ENCODE measurements at regions of chr2 and their contacts with region 1.

Region 1: GRCh38 chr2:176126929-176127773 is 2.4 kb upstream of the HOXD8 start:
- DNase-seq: peak in 1 of 2 experiments; percentile 82
- H3K4me3 ChIP-seq: no peak overlapping the region
- H3K4me1 ChIP-seq: peaks cover 11% of the 10 kb centered on the region; the same call in 1 of the 2 replicates
- H3K27me3 ChIP-seq: peaks cover 6% of the 10 kb centered on the region; the same call in 1 of the 2 replicates

Region 2: GRCh38 chr2:176554101-176555048 is 427.2 kb after region 1 on chr2:
- in situ Hi-C with region 1: loop called (anchors 10 kb)
- DNase-seq: peak; percentile 38 to 48
- H3K4me3 ChIP-seq: peak overlapping the region; percentile 14
- H3K4me1 ChIP-seq: peaks cover 4% of the 10 kb centered on the region; the same call in 1 of the 2 replicates
- H3K27me3 ChIP-seq: peaks cover 45% of the 10 kb centered on the region

Region 3: GRCh38 chr2:176595986-176596385 is 468.8 kb after region 1 on chr2:
- in situ Hi-C with region 1: no loop called
- DNase-seq: no peak
- H3K4me3 ChIP-seq: no peak overlapping the region
- H3K4me1 ChIP-seq: no peaks in the 10 kb centered on the region
- H3K27me3 ChIP-seq: peaks cover 8% of the 10 kb centered on the region

Region 4: GRCh38 chr2:176638167-176639015 is 511.2 kb after region 1 on chr2:
- in situ Hi-C with region 1: loop called (anchors 5 kb)
- DNase-seq: peak; percentile 51 to 79
- H3K4me3 ChIP-seq: peak overlapping the region; percentile 31
- H3K4me1 ChIP-seq: no peaks in the 10 kb centered on the region
- H3K27me3 ChIP-seq: peaks cover 63% of the 10 kb centered on the region

Region 5: GRCh38 chr2:176814306-176815052 is 687.3 kb after region 1 on chr2:
- in situ Hi-C with region 1: loop called (anchors 10 kb)
- DNase-seq: peak in 1 of 2 experiments; percentile 64
- H3K4me3 ChIP-seq: no peak overlapping the region
- H3K4me1 ChIP-seq: peaks cover 20% of the 10 kb centered on the region
- H3K27me3 ChIP-seq: no peaks in the 10 kb centered on the region

Region 6: GRCh38 chr2:177155631-177156030 is 1028.5 kb after region 1 on chr2:
- in situ Hi-C with region 1: loop called (anchors 10 kb)
- DNase-seq: no peak
- H3K4me3 ChIP-seq: no peak overlapping the region
- H3K4me1 ChIP-seq: no peaks in the 10 kb centered on the region
- H3K27me3 ChIP-seq: peaks cover 35% of the 10 kb centered on the region

Measured in HAP-1 (cell line).